ENCODE measurements at regions of chr1 and their contacts with region 1.

Region 1: GRCh38 chr1:32321712-32322291 is 14.2 kb downstream of the MARCKSL1 start:
- DNase-seq: no peak
- CTCF ChIP-seq: no peak

Region 2: DNA sequence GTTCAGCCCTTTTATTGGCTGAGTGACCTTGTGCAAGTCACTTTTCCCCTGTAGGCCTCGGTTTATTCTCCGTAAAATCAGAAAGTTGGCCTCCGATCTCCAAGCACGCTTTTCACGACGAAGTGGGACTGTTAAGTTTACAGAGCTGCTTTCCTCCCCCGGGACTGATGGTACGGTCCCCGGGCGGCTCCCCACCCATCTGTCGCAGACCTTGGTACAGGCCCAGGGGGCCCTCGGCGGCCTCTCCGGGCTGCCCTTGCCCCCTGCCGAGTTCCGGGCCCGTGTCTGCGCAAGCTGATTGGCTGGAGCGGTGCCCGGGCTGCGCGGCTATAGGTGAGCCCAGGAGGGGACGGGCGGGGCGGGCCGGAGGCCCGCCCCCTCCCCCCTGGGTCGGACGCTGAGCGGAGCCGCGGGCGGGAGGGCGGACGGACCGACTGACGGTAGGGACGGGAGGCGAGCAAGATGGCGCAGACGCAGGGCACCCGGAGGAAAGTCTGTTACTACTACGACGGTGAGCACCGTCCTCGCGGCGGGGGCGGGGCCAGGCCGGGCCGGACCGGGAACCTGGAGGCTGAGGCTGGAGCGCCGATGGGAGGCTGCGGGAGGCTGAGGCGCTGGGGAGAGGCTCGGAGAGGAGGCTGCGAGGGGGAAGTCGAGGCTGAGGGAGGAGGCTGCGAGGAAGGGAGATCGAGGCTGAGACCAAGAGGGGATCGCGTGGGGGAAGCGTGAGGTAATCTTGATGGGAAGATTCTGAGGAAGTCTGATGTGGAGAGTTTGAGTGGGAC is 29.9 kb before region 1 on chr1 and contains the start of gene HDAC1:
- CTCF ChIA-PET with region 1: interaction called, 10 read pairs
- POLR2A ChIA-PET with region 1: interaction called, 4 read pairs
- DNase-seq: peak; percentile 99
- CTCF ChIP-seq: no peak

Measured in GM10248 (cell line).